HCT116 (cell line): ENCODE measurements at regions of chr4 and their contacts with region 1.

Region 1: GRCh38 chr4:89610236-89610635 is 226.7 kb downstream of the SNCA start:
- DNase-seq: no peak
- ATAC-seq: no peak
- H3K4me3 ChIP-seq: no peak overlapping the region
- H3K27ac ChIP-seq: no peak overlapping the region
- H3K4me1 ChIP-seq: no peaks in the 10 kb centered on the region
- H3K27me3 ChIP-seq: no peaks in the 10 kb centered on the region
- CTCF ChIP-seq: no peak
- POLR2A ChIP-seq: no peak
- RAD21 ChIP-seq: no peak

Region 2: GRCh38 chr4:88308587-88308986 is 1301.6 kb before region 1 on chr4:
- CTCF ChIA-PET with region 1: no interaction called
- POLR2A ChIA-PET with region 1: no interaction called
- RAD21 ChIA-PET with region 1: no interaction called
- intact Hi-C with region 1: no loop called
- DNase-seq: no peak
- ATAC-seq: no peak
- H3K4me3 ChIP-seq: no peak overlapping the region
- H3K27ac ChIP-seq: no peak overlapping the region
- H3K4me1 ChIP-seq: no peaks in the 10 kb centered on the region
- H3K27me3 ChIP-seq: no peaks in the 10 kb centered on the region
- CTCF ChIP-seq: no peak
- POLR2A ChIP-seq: no peak
- RAD21 ChIP-seq: no peak

Region 3: DNA sequence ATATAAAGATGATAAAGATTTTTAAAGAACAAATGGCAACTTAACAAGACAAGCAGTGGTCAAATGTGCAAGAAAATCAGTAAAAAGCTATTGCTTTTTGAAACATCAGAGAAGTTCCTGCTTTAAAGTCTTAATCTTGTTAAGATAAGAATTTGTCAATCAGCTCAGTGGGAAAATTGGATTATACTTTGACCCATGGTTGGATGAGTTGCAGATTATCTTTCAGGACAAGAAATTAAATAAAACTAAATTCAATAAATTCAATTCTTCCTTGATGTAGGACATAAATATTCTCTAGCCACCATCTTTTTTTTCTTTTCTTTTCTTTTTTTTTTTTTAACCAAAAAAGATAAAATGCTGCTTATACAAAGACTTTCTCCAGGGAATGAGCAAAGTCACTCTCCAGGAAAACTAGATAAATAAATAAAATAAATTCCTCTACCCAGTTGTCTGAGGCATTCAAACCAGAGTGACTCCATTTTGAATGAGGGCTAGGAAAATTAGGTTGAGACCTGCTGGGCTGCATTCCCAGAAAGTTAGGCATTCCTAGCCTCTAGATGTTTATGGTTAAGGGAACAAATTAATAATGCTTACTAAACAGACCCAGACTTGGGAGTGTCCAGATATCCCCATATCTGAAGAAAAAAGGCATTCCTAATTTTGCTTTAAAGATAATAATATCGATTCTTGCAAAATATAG is 15.5 kb after region 1 on chr4:
- CTCF ChIA-PET with region 1: no interaction called
- POLR2A ChIA-PET with region 1: no interaction called
- RAD21 ChIA-PET with region 1: no interaction called
- intact Hi-C with region 1: loop called (anchors 2 kb)
- DNase-seq: no peak
- ATAC-seq: no peak
- H3K4me3 ChIP-seq: no peak overlapping the region
- H3K27ac ChIP-seq: no peak overlapping the region
- H3K4me1 ChIP-seq: no peaks in the 10 kb centered on the region
- H3K27me3 ChIP-seq: no peaks in the 10 kb centered on the region
- CTCF ChIP-seq: no peak
- POLR2A ChIP-seq: no peak
- RAD21 ChIP-seq: no peak

Region 4: GRCh38 chr4:90306810-90307209 is 696.6 kb after region 1 on chr4:
- CTCF ChIA-PET with region 1: no interaction called
- POLR2A ChIA-PET with region 1: no interaction called
- RAD21 ChIA-PET with region 1: no interaction called
- intact Hi-C with region 1: no loop called
- DNase-seq: no peak
- ATAC-seq: no peak
- H3K4me3 ChIP-seq: no peak overlapping the region
- H3K27ac ChIP-seq: no peak overlapping the region
- H3K4me1 ChIP-seq: no peaks in the 10 kb centered on the region
- H3K27me3 ChIP-seq: no peaks in the 10 kb centered on the region
- CTCF ChIP-seq: no peak
- POLR2A ChIP-seq: no peak
- RAD21 ChIP-seq: no peak